ENCODE measurements at regions of chr1 and their contacts with region 1.

Region 1: GRCh38 chr1:52686830-52687229 is 11.3 kb downstream of the COA7 start:
- DNase-seq: no peak
- ATAC-seq: no peak
- H3K4me3 ChIP-seq: no peak overlapping the region
- H3K27ac ChIP-seq: no peak overlapping the region
- H3K4me1 ChIP-seq: no peaks in the 10 kb centered on the region
- H3K27me3 ChIP-seq: no peaks in the 10 kb centered on the region
- CTCF ChIP-seq: no peak
- POLR2A ChIP-seq: no peak
- RAD21 ChIP-seq: no peak

Region 2: DNA sequence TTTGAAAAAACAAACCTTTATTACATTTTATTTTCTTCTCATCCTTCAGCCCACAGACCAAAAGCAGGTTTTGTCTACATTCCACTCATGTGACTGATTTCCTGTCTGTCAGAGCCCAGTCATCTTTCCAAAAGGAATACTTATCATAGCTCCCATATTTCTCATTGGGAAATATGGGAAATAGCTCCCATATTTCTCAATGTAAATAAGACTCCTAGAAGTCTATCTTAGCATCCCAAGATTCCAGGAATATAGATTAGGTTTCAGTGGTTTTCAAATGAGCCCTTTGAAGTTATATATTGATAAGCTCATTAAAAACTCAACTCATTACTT is 789.2 kb before region 1 on chr1:
- CTCF ChIA-PET with region 1: interaction called, 3 read pairs
- POLR2A ChIA-PET with region 1: no interaction called
- RAD21 ChIA-PET with region 1: no interaction called
- intact Hi-C with region 1: loop called (anchors 2 kb)
- DNase-seq: peak; percentile 47
- ATAC-seq: peak; percentile 64
- H3K4me3 ChIP-seq: peak overlapping the region in 1 of 2 experiments; percentile 25; a peak in 2 of 4 replicates
- H3K27ac ChIP-seq: peak overlapping the region; percentile 24; the same call in 1 of the 2 replicates
- H3K4me1 ChIP-seq: peaks cover 14 to 37% of the 10 kb centered on the region in 2 experiments
- H3K27me3 ChIP-seq: no peaks in the 10 kb centered on the region
- CTCF ChIP-seq: no peak
- POLR2A ChIP-seq: no peak
- RAD21 ChIP-seq: no peak

Region 3: DNA sequence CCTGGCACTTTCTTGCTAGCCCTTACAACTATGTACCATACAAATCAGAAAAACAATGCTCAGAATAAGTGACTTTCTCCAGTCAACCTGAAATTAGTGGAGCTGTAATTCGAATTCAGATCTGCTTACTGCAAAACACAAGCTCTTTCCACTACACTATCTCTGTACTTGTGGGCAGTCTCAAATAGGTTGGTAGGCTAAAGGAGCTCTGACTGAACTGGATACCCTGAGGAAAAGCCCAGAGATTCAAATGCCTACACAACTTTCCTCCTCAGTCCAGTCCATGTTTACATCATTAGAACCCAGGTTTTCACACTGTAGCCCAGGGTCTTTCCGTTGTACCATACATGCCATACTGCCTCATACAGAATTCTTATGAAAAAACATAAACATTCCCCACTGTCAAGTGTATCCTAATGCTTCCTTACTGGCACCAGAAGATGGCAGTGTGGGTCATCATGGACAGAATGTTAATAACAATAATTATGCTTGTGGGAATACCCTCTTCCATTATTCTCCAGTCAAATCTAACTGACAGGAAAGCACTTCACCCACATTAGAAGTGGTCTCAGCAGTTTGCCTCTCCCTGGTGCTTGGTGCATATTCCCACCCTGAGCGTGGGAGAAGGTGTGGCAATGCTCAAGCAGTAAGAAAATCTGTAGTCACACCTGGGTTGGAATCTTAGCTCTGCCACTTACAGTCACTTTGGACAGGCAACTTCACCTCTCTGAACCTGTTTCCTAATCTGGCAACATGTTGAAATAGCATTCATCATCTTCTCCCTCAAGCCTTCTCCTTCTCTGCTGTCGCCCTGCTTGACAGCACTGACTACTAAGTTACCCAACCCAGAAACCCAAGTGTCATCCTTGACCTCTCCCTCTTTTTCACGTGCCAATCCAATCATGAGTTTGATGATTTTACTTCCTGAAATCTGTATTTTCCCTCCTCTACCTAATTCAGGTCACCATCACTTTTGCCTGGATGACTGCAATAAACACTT is 559.3 kb before region 1 on chr1:
- CTCF ChIA-PET with region 1: no interaction called
- POLR2A ChIA-PET with region 1: no interaction called
- RAD21 ChIA-PET with region 1: no interaction called
- intact Hi-C with region 1: loop called (anchors 5 kb)
- DNase-seq: peak; percentile 57
- ATAC-seq: peak; percentile 98
- H3K4me3 ChIP-seq: no peak overlapping the region
- H3K27ac ChIP-seq: no peak overlapping the region
- H3K4me1 ChIP-seq: no peaks in the 10 kb centered on the region
- H3K27me3 ChIP-seq: no peaks in the 10 kb centered on the region
- CTCF ChIP-seq: peak; percentile 66 to 86 (median 81)
- POLR2A ChIP-seq: no peak
- RAD21 ChIP-seq: peak; percentile 88

Region 4: GRCh38 chr1:52365746-52366516 is 320.9 kb before region 1 on chr1 and contains the start of gene CC2D1B:
- CTCF ChIA-PET with region 1: no interaction called
- POLR2A ChIA-PET with region 1: no interaction called
- RAD21 ChIA-PET with region 1: no interaction called
- intact Hi-C with region 1: loop called (anchors 5 kb)
- DNase-seq: peak; percentile 96
- ATAC-seq: peak; percentile 93
- H3K4me3 ChIP-seq: peak within 1 kb of the TSS; percentile 71 to 90
- H3K27ac ChIP-seq: peak within 1 kb of the TSS; percentile 91
- H3K4me1 ChIP-seq: peaks cover 12 to 37% of the 10 kb centered on the region in 2 experiments; a peak in 3 of 4 replicates
- H3K27me3 ChIP-seq: no peaks in the 10 kb centered on the region
- CTCF ChIP-seq: peak in 1 of 3 experiments; percentile 19; a peak in 2 of 6 replicates
- POLR2A ChIP-seq: peak; percentile 84
- RAD21 ChIP-seq: no peak
- total RNA-seq, gene CC2D1B: 20.4 TPM

Region 5: GRCh38 chr1:52404116-52404986 is 282.5 kb before region 1 on chr1 and contains the starts of genes ORC1 and PRPF38A:
- CTCF ChIA-PET with region 1: interaction called, 7 read pairs
- POLR2A ChIA-PET with region 1: no interaction called
- RAD21 ChIA-PET with region 1: no interaction called
- intact Hi-C with region 1: loop called (anchors 2 kb)
- DNase-seq: peak; percentile 95
- ATAC-seq: peak; percentile 87
- H3K4me3 ChIP-seq: peak within 1 kb of the TSS; percentile 99
- H3K27ac ChIP-seq: peak within 1 kb of the TSS; percentile 93
- H3K4me1 ChIP-seq: peaks cover 2 to 14% of the 10 kb centered on the region in 2 experiments; a peak in 2 of 4 replicates
- H3K27me3 ChIP-seq: no peaks in the 10 kb centered on the region
- CTCF ChIP-seq: peak; percentile 51 to 62 (median 54); a peak in 5 of 6 replicates
- POLR2A ChIP-seq: peak; percentile 95
- RAD21 ChIP-seq: no peak
- total RNA-seq, gene ORC1: 25.6 TPM
- total RNA-seq, gene PRPF38A: 50.2 TPM

Region 6: GRCh38 chr1:52534928-52535764 is 151.7 kb before region 1 on chr1:
- CTCF ChIA-PET with region 1: no interaction called
- POLR2A ChIA-PET with region 1: no interaction called
- RAD21 ChIA-PET with region 1: no interaction called
- intact Hi-C with region 1: no loop called
- DNase-seq: no peak
- ATAC-seq: no peak
- H3K4me3 ChIP-seq: no peak overlapping the region
- H3K27ac ChIP-seq: no peak overlapping the region
- H3K4me1 ChIP-seq: no peaks in the 10 kb centered on the region
- H3K27me3 ChIP-seq: no peaks in the 10 kb centered on the region
- CTCF ChIP-seq: no peak
- POLR2A ChIP-seq: no peak
- RAD21 ChIP-seq: no peak

Region 7: GRCh38 chr1:52552505-52553361 is 134.1 kb before region 1 on chr1 and contains the start of gene TUT4:
- CTCF ChIA-PET with region 1: no interaction called
- POLR2A ChIA-PET with region 1: no interaction called
- RAD21 ChIA-PET with region 1: no interaction called
- intact Hi-C with region 1: loop called (anchors 2 kb)
- DNase-seq: peak; percentile 48
- ATAC-seq: peak; percentile 69
- H3K4me3 ChIP-seq: peak within 1 kb of the TSS; percentile 77 to 86
- H3K27ac ChIP-seq: peak within 1 kb of the TSS; percentile 91
- H3K4me1 ChIP-seq: peaks cover 8 to 25% of the 10 kb centered on the region in 2 experiments; a peak in 2 of 4 replicates
- H3K27me3 ChIP-seq: no peaks in the 10 kb centered on the region
- CTCF ChIP-seq: no peak
- POLR2A ChIP-seq: peak; percentile 57
- RAD21 ChIP-seq: no peak
- total RNA-seq, gene TUT4: 50.0 TPM

Region 8: DNA sequence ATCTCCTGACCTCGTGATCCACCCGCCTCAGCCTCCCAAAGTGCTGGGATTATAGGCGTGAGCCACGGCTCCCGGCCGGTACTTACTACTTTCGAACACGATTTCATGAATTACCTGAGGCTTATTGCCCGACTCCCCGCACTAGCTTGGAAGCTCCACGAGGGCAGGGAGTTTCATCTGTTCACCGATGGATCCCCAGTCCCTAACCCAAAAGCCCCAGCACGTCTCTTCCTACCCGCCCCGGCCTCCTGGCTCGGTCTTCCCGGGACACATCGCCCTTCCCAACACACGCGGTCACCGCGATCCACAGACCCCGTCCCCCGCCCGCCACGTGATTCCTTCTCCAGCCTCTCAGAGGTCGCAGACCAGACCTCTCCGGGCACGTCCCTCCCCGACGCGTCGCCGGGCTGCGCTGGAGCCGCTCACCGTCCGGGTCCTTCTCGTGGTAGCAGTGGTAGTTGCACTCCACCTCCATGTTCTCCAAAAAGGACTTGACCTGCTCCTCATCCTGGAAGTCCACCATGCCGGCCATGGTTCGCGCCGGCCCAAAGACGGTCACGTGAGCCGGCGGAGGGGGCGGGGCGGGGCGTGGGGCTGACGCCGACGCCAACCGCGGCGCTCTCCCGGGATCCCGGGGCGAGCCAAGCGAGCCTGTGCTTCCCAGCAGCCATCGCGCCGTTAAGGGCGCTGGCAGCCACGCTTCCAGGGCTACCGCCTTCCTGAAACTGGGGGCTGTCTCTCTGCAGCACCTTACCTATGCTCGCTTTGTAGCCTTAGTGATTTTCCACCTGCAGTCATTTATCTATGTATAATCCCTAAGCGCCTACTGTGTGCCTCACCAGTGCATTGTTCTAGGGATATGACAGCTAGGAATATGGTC is 11.2 kb after region 1 on chr1 and contains the start of gene COA7:
- CTCF ChIA-PET with region 1: interaction called, 10 read pairs
- POLR2A ChIA-PET with region 1: no interaction called
- RAD21 ChIA-PET with region 1: no interaction called
- intact Hi-C with region 1: no loop called
- DNase-seq: peak; percentile 62
- ATAC-seq: peak; percentile 77
- H3K4me3 ChIP-seq: peak within 1 kb of the TSS; percentile 77 to 82
- H3K27ac ChIP-seq: peak within 1 kb of the TSS; percentile 78
- H3K4me1 ChIP-seq: peaks cover 5 to 32% of the 10 kb centered on the region in 2 experiments; a peak in 3 of 4 replicates
- H3K27me3 ChIP-seq: no peaks in the 10 kb centered on the region
- CTCF ChIP-seq: no peak
- POLR2A ChIP-seq: peak; percentile 87
- RAD21 ChIP-seq: no peak
- total RNA-seq, gene COA7: 43.6 TPM